ENCODE measurements at regions of chr18 and their contacts with region 1.

Region 1: DNA sequence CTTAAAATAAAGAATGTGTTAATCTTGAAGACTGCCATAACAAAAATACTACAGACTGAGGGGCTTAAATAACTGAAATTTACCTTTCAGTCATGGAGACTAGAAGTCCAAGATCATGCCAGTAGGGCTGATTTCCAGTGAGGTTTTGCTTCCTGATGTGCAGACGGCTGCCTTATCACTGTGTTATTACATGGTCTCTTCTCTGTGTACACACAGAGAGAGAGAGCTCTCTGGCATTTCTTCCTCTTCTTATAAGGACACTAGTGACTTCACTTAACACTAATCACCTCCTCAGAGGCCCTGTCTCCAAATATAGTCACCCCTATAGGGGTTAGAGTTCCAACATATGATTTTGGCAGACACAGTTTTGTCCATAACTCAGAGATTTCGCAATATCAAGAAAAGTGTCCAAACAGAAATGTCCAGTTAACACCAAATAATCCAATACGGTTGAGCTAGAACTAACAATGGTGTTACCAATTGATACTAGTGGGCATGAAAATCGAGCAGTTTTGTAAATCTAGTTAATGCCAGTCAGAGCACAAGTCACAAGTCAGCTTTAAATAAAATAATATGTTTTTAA is 399.8 kb downstream of the ADCYAP1 start:
- DNase-seq: no peak
- ATAC-seq: no peak
- H3K4me3 ChIP-seq: no peak overlapping the region
- H3K27ac ChIP-seq: no peak overlapping the region
- H3K4me1 ChIP-seq: no peaks in the 10 kb centered on the region
- H3K27me3 ChIP-seq: no peaks in the 10 kb centered on the region
- CTCF ChIP-seq: no peak
- POLR2A ChIP-seq: no peak

Region 2: GRCh38 chr18:1361936-1362335 is 57.5 kb after region 1 on chr18:
- intact Hi-C with region 1: loop called in 1 of 10 experiments (anchors 10 kb)
- DNase-seq: no peak
- ATAC-seq: no peak
- H3K4me3 ChIP-seq: no peak overlapping the region
- H3K27ac ChIP-seq: no peak overlapping the region
- H3K4me1 ChIP-seq: no peaks in the 10 kb centered on the region
- H3K27me3 ChIP-seq: no peaks in the 10 kb centered on the region
- CTCF ChIP-seq: no peak
- POLR2A ChIP-seq: no peak

Region 3: DNA sequence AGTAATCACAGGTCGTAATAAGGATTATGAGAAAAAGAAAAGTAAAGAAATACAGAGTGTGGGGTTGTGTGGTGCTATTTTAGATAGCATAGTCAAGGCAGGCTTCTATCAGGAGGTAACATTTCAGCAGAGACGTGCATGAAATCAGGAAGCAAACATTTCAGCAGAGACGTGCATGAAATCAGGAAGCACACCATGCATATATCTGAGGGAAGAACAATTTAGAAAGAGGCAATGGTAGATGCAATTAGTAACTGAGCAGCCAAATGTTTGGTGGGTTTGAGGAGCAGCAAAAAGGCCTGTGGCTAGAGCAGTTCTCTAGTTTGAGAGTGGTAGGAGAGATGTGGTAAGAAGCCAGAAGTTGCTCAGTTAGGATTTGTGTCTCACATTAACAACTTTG is 313.9 kb after region 1 on chr18:
- intact Hi-C with region 1: no loop called
- DNase-seq: no peak
- ATAC-seq: no peak
- H3K4me3 ChIP-seq: no peak overlapping the region
- H3K27ac ChIP-seq: no peak overlapping the region
- H3K4me1 ChIP-seq: no peaks in the 10 kb centered on the region
- H3K27me3 ChIP-seq: no peaks in the 10 kb centered on the region
- CTCF ChIP-seq: no peak
- POLR2A ChIP-seq: no peak

Measured in heart left ventricle (tissue), 16 donors.